CD8-positive, alpha-beta T cell (primary cell): ENCODE measurements at regions of chr5 and their contacts with region 1.

Region 1: DNA sequence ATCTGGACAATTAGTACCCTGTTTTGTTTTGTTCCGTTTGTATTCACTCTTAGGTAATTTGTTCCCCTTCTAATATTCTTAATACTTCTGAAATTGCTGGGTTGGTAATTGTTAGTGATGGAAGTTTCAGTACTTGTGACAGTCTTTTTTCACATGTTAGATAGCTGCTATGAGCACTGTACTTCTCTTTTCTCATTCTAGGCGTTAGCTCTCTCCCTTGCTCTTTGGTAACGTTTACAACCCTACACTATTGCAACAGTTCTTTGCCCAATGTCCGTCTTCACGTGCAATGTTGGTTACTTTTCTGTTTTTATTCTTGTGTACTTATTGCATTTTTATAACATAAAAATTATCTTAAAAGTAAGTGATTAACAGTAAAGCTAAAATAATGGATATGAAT is 1509.0 kb downstream of the MAT2B start:
- DNase-seq: no peak
- ATAC-seq: no peak
- H3K4me3 ChIP-seq: no peak overlapping the region
- H3K4me3 Mint-ChIP-seq: no peak overlapping the region
- H3K27ac ChIP-seq: no peak overlapping the region
- H3K27ac Mint-ChIP-seq: no peak overlapping the region
- H3K4me1 ChIP-seq: no peaks in the 10 kb centered on the region
- H3K4me1 Mint-ChIP-seq: no peaks in the 10 kb centered on the region
- H3K27me3 ChIP-seq: no peaks in the 10 kb centered on the region
- H3K27me3 Mint-ChIP-seq: no peaks in the 10 kb centered on the region
- CTCF ChIP-seq: no peak

Region 2: GRCh38 chr5:164115420-164115819 is 899.0 kb before region 1 on chr5:
- CTCF ChIA-PET with region 1: no interaction called
- POLR2A ChIA-PET with region 1: no interaction called
- intact Hi-C with region 1: no loop called
- DNase-seq: no peak
- ATAC-seq: no peak
- H3K4me3 ChIP-seq: no peak overlapping the region
- H3K4me3 Mint-ChIP-seq: no peak overlapping the region
- H3K27ac ChIP-seq: no peak overlapping the region
- H3K27ac Mint-ChIP-seq: no peak overlapping the region
- H3K4me1 ChIP-seq: no peaks in the 10 kb centered on the region
- H3K4me1 Mint-ChIP-seq: no peaks in the 10 kb centered on the region
- H3K27me3 ChIP-seq: no peaks in the 10 kb centered on the region
- H3K27me3 Mint-ChIP-seq: no peaks in the 10 kb centered on the region
- CTCF ChIP-seq: no peak

Region 3: GRCh38 chr5:164975986-164976385 is 38.5 kb before region 1 on chr5:
- CTCF ChIA-PET with region 1: no interaction called
- POLR2A ChIA-PET with region 1: no interaction called
- intact Hi-C with region 1: loop called in 1 of 2 experiments (anchors 1 kb)
- DNase-seq: no peak
- ATAC-seq: no peak
- H3K4me3 ChIP-seq: no peak overlapping the region
- H3K4me3 Mint-ChIP-seq: no peak overlapping the region
- H3K27ac ChIP-seq: no peak overlapping the region
- H3K27ac Mint-ChIP-seq: no peak overlapping the region
- H3K4me1 ChIP-seq: no peaks in the 10 kb centered on the region
- H3K4me1 Mint-ChIP-seq: no peaks in the 10 kb centered on the region
- H3K27me3 ChIP-seq: no peaks in the 10 kb centered on the region
- H3K27me3 Mint-ChIP-seq: no peaks in the 10 kb centered on the region
- CTCF ChIP-seq: no peak

Region 4: DNA sequence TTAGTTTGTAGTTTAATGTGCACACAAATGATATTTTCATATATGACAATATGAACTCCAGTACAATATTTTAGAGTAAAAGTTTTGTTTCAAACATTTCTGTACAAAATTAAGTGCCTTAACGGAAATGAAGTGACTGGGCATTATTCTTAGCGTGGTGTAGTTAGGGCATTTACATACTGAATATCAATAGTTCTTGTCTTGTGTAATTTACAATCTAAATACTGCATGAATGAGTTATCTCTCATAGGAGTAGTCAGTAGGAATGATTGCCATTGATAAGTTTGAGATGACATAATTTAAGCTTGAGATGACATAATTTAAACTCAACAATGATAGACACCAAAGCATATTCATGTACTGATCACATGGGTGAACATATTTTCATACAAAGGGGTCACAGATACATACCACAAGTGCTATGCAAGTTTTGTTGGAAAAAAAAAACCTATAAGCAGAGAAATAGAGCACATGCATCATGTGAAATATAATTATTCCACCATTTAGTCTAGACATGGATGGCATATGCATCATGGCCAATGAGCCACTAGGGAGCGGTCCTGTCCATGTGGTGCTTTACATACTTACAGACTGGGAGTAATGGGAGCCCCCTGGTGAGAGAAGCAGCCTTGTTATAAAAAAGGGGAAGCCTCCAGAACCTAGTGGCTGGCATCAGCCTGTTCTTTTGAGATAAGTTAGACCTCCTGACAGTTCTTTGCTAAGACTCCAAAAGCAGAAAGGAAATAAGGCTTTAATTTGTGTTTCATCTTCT is 14.8 kb after region 1 on chr5:
- CTCF ChIA-PET with region 1: no interaction called
- POLR2A ChIA-PET with region 1: no interaction called
- intact Hi-C with region 1: no loop called
- DNase-seq: peak in 1 of 9 experiments; percentile 1
- ATAC-seq: no peak
- H3K4me3 ChIP-seq: no peak overlapping the region
- H3K4me3 Mint-ChIP-seq: no peak overlapping the region
- H3K27ac ChIP-seq: no peak overlapping the region
- H3K27ac Mint-ChIP-seq: no peak overlapping the region
- H3K4me1 ChIP-seq: no peaks in the 10 kb centered on the region
- H3K4me1 Mint-ChIP-seq: no peaks in the 10 kb centered on the region
- H3K27me3 ChIP-seq: no peaks in the 10 kb centered on the region
- H3K27me3 Mint-ChIP-seq: no peaks in the 10 kb centered on the region
- CTCF ChIP-seq: no peak

Region 5: GRCh38 chr5:165039748-165040147 is 25.3 kb after region 1 on chr5:
- CTCF ChIA-PET with region 1: no interaction called
- POLR2A ChIA-PET with region 1: no interaction called
- intact Hi-C with region 1: no loop called
- DNase-seq: no peak
- ATAC-seq: no peak
- H3K4me3 ChIP-seq: no peak overlapping the region
- H3K4me3 Mint-ChIP-seq: no peak overlapping the region
- H3K27ac ChIP-seq: no peak overlapping the region
- H3K27ac Mint-ChIP-seq: no peak overlapping the region
- H3K4me1 ChIP-seq: no peaks in the 10 kb centered on the region
- H3K4me1 Mint-ChIP-seq: no peaks in the 10 kb centered on the region
- H3K27me3 ChIP-seq: no peaks in the 10 kb centered on the region
- H3K27me3 Mint-ChIP-seq: no peaks in the 10 kb centered on the region
- CTCF ChIP-seq: no peak